ENCODE measurements at regions of chr15 and their contacts with region 1.

Region 1: DNA sequence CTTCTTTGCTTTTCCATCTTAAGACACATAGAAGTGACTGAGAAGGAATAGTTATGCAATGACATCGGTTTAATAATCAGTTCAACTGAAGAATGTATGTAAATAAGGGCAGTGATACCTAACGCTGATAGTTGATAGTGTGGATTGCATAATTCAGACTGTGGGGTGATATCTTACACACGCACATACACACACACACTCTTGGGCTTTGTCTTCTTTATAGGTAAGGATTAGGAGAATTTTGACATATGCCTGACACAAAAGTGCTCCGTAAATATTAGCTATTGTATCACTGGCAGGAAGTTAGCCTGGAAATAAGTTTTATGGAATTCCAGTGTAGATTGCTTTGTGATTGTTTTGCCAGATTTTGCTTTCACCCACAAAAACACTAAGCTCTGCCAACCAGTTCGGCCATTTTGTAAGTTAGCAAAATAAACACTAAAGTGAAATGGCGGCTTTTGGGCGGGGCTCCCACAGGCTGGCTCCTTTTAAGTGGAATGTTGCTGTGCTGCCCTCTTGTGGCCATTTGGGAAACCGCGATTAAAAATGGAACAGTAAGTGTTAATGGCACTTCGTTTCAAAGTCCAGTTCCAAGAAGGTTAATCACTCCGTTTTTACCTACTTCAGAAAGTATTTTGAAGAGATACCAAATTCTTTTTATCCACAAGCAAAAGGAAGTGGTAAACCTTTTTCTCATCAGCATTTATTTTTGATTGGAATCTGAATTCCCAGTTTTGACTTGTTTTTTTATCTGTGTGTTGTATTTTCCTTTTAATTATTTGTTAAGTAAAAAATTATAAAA is 17.7 kb downstream of the CHD2 start:
- DNase-seq: peak; percentile 96
- H3K4me3 Mint-ChIP-seq: peak overlapping the region; percentile 57
- H3K27ac Mint-ChIP-seq: peak overlapping the region; percentile 95
- H3K4me1 Mint-ChIP-seq: peaks cover 53% of the 10 kb centered on the region
- H3K27me3 Mint-ChIP-seq: no peaks in the 10 kb centered on the region
- CTCF ChIP-seq: peak; percentile 78

Region 2: GRCh38 chr15:92797168-92797951 is 120.4 kb before region 1 on chr15:
- CTCF ChIA-PET with region 1: interaction called, 53 read pairs
- POLR2A ChIA-PET with region 1: interaction called, 125 read pairs
- intact Hi-C with region 1: loop called (anchors 1 kb)
- DNase-seq: peak; percentile 76
- H3K4me3 Mint-ChIP-seq: no peak overlapping the region
- H3K27ac Mint-ChIP-seq: peak overlapping the region; percentile 84
- H3K4me1 Mint-ChIP-seq: peaks cover 18% of the 10 kb centered on the region
- H3K27me3 Mint-ChIP-seq: no peaks in the 10 kb centered on the region
- CTCF ChIP-seq: peak; percentile 53

Region 3: DNA sequence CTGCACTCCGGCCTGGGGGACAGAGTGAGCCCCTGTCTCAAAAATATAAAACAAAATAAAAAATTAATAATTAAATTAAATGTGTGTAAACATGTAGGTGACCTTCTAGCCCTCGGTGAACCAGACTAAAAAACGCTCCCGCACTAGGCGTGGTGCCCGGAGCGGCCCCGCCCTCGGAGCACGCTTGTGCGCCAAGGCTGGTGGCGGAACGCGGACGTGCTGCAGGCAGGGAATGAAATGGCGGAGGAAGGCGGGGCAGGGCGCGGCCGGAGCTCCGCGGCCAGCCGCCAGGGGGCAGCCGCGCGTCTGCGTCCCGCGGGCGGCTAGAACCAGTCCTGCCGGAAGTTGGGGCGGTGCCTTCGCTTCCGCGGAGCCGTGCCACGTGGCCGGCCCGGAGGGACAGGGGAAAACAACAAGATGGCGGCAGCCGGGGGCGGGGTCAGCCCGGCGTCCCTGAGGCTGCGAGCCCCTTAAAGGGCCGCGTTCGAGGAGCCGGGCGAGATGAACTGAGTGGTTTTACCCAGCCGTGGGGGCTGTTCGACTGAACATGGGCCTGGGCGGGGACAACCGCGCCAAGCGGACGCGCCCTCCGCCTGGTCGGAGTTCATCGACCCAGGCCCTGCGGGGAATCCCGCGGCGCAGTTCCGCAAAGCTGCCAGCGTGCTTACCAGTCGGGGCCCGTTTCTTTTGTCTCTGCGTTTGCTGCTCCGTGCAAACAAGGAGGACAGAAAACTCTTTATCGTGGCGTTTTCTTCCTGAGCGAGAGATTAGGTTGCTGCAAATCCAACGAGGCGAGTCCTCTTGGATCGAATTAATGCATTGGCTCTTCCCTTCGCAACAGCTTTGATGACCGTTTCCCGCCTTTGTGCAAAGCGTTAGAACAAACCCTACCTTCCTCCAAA is 108.6 kb before region 1 on chr15:
- CTCF ChIA-PET with region 1: interaction called, 14 read pairs
- POLR2A ChIA-PET with region 1: interaction called, 266 read pairs
- intact Hi-C with region 1: loop called (anchors 1 kb)
- DNase-seq: peak; percentile 95
- H3K4me3 Mint-ChIP-seq: peak overlapping the region; percentile 72
- H3K27ac Mint-ChIP-seq: peak overlapping the region; percentile 96
- H3K4me1 Mint-ChIP-seq: peaks cover 28% of the 10 kb centered on the region
- H3K27me3 Mint-ChIP-seq: no peaks in the 10 kb centered on the region
- CTCF ChIP-seq: peak; percentile 92

Region 4: GRCh38 chr15:92831655-92832328 is 86.0 kb before region 1 on chr15:
- CTCF ChIA-PET with region 1: interaction called, 4 read pairs
- POLR2A ChIA-PET with region 1: interaction called, 22 read pairs
- intact Hi-C with region 1: no loop called
- DNase-seq: peak; percentile 95
- H3K4me3 Mint-ChIP-seq: peak overlapping the region; percentile 60
- H3K27ac Mint-ChIP-seq: peak overlapping the region; percentile 95
- H3K4me1 Mint-ChIP-seq: peaks cover 5% of the 10 kb centered on the region
- H3K27me3 Mint-ChIP-seq: no peaks in the 10 kb centered on the region
- CTCF ChIP-seq: no peak

Region 5: DNA sequence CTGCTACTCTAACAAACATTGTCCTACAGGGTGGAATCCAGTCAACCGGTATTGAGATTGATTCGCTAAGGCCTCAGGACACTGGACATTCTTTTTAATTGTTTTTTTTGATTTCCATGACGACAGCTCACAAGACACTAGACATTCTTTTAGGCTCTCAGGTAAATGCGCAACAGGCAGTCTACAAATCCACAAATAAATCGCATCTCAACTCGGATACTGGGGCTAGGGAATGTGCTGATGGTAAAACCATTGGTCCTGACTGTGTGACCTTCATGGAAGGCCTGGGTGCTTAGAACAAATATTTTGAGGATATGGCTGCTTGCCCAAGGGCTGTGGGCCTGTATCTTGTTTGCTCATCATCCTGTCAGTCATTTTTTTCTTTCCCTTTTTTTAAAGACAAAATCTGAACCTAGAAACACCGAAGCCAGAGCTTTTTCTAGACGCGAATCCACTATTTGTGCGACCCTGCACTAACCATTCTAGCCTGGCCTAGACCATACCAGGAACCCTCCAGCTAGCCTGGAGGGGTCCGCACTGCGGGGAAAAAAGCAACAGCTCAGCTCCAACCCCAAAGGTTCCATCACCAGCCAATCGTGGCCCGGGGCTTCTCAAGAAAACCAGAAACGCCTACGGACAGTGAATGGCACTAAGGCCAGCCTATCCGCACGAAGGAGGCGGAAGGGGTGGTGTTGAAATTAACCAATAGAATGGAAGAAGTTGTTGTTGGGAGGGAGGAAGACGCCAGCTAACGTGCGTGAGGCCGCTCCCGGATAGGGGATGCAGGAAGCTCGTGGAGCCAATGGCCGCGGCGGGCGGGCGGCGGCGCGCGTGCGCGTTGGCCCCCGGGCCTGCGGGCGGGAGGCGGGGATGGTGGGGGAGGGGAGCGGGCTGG is 35.8 kb before region 1 on chr15:
- CTCF ChIA-PET with region 1: interaction called, 7 read pairs
- POLR2A ChIA-PET with region 1: interaction called, 258 read pairs
- intact Hi-C with region 1: loop called (anchors 2 kb)
- DNase-seq: peak; percentile 99
- H3K4me3 Mint-ChIP-seq: peak overlapping the region; percentile 87
- H3K27ac Mint-ChIP-seq: peak overlapping the region; percentile 98
- H3K4me1 Mint-ChIP-seq: peaks cover 28% of the 10 kb centered on the region
- H3K27me3 Mint-ChIP-seq: no peaks in the 10 kb centered on the region
- CTCF ChIP-seq: no peak

Region 6: GRCh38 chr15:92903941-92904831 is 13.6 kb before region 1 on chr15:
- CTCF ChIA-PET with region 1: interaction called, 24 read pairs
- POLR2A ChIA-PET with region 1: interaction called, 381 read pairs
- intact Hi-C with region 1: loop called (anchors 1 kb)
- DNase-seq: peak; percentile 98
- H3K4me3 Mint-ChIP-seq: peak overlapping the region; percentile 91
- H3K27ac Mint-ChIP-seq: peak overlapping the region; percentile 99
- H3K4me1 Mint-ChIP-seq: peaks cover 35% of the 10 kb centered on the region
- H3K27me3 Mint-ChIP-seq: no peaks in the 10 kb centered on the region
- CTCF ChIP-seq: no peak